ENCODE measurements at regions of chr4 and their contacts with region 1.

Region 1: DNA sequence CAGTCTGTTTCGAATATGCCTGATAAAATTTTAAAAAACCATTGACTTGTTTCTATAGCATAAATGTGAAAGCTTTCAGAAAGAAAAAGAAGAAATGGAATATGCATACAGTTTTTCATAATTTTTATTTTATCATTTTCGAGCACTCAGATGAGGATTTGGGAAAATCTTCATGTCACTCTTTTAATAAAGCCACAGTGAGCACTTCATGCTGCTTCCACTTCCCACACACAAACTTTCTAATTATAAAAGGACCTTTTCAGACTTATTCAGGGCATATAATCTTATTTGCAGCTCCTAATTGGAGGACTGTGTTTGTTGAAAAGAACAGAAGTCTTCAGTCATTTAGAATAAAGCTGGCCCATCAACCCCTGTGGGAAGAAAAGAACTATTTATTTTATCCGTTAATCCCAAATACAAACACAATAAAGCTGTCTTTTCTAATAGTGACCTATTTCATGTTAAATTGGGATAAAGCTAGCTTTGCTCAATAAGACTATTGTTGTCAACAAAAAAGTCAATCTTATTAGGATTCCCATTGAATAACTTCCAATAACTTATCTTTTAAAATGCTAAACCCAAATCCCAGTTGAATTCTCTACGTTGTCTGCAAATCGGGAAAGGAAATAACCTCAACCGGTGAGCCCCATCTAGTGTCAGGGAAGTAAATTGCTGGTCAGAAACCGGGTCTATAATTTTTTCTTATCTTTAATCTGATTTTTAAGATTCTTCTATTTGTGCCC is 211.5 kb downstream of the PDGFRA start:
- DNase-seq: no peak

Region 2: DNA sequence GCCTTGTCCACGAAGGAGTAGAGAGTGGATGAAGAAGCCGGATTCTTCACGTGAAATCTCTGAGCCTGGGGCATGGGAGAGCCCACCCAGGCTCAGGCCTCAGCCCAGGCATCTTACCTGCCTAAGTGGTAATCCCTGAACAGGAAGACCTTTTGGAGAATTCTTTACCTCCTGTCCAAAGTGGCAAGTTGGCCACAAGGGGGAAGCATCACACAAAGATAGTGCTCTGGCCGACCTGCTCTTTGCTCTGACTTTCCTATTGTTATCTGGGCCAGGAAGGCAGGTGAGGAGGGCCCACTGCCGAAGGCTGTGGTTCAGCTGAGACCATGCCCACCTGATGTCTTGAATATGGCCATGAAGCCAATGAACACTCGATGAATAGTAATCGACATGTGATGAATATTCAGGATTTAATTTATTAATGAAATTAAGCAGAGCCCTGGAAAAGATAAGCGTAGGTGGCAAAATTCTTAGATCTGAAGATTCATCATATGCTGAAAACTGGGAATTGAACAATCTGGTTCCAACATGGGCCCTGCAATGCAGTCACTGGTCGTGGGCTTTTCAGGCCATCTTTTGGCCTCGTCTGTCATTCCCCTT is 117.6 kb before region 1 on chr4:
- intact Hi-C with region 1: loop called (anchors 5 kb)
- DNase-seq: no peak

Region 3: DNA sequence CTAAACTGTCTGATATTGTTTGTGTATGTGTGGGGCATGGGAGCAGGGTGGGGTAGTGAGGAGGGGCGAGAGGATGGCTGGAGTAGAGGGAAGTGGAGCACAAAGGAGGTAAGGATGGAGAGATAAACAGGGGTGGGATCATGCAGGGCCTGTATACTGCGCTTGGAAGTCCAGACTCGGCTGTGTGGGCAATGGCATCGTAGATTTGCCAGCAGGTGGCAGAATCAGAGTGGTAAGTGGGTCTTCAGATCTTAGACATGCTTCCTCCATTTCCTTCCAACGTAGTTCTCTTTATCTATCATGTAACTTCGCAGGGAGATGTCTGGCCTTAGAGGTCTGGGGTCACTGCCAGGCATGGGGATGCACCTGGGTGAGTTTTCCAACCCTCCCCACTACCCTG is 56.0 kb before region 1 on chr4:
- intact Hi-C with region 1: loop called (anchors 2 kb)
- DNase-seq: no peak

Region 4: DNA sequence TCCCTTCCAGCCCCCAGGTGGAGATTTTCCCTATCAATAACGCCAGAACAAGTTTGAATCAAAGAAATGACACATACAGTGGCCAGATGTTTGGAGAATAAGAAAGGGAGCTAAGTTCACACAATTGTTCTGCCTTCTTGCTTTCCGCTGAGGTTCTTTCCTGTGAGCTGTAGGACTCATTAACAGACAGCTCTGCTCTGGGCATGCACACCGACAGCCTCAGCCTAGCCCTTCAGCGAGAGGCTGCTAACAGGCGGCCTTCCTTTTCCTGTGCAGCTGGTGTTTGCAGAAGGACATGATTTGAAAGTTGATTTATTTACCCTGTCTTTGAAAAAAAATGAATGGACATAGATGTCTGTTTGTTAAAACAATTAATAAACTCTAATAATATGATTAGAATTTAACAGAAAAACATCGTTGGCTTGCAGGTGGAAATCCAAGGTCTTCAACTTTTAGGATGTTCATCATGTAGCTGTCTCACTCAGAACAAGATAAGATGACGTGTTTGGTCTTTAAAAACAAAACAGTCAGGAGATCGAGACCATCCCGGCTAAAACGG is 501.5 kb after region 1 on chr4:
- intact Hi-C with region 1: loop called (anchors 10 kb)
- DNase-seq: no peak

Measured in cardiac septum (tissue), 1 donor.